ENCODE measurements at regions of chr4 and their contacts with region 1.

Region 1: DNA sequence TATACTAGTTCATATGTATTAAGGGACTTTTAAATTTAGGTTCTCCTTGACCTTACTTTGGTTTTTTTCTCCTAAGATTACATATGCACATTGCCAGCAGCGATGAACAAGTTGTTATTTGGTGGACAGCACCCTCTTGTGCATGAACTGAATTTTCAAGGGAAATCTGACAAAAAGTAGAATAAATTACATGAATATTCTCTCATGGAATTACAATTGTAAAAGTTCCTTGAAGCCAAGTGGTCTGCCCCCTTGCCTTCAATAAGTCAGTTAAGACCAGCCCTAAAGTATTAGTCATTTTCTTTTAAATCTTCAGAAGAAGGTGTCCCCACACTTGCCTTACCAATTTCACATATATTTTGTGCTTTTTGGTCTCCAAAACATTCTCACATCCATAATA is 30.7 kb upstream of the SMARCA5 start:
- DNase-seq: peak; percentile 18
- H3K4me3 ChIP-seq: no peak overlapping the region
- H3K27ac ChIP-seq: no peak overlapping the region
- H3K4me1 ChIP-seq: no peaks in the 10 kb centered on the region
- H3K27me3 ChIP-seq: no peaks in the 10 kb centered on the region
- CTCF ChIP-seq: peak; percentile 40 to 57

Region 2: DNA sequence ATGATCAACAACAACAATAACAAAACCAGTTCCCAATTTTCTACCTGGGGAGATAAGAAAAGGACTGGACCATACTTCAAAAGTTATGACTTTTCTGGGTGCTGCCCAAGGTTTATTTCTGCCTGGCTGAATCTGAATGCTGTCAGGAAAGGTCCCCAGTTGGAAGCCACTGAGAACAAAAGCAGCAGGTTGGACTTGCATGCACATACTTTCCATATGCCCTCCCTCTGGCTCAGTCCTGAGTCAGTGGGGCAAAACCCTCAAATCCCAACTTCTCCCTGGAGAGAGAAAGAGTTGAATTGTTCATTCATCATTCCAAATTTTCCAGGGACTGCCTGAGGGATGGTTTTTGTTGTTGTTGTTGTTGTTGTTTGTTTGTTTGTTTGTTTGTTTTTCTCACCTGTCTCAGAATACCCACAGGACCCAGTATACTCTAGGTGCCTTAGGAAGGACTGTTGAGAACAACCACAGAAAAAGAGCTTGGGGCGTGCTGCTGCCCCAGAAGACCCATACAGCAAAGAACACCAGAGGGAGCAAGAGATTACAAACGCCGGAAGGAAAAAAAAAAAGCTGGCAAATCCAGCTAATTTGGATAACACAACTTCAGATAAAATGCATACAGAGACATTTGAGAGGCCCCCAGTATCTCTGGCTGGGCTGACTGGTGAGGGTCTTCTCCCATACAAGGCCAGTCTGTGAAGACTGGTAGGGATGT is 497.8 kb before region 1 on chr4:
- CTCF ChIA-PET with region 1: no interaction called
- dilution Hi-C with region 1: no loop called
- in situ Hi-C with region 1: loop called in 1 of 2 experiments (anchors 25 kb)
- intact Hi-C with region 1: no loop called
- DNase-seq: peak; percentile 16
- H3K4me3 ChIP-seq: no peak overlapping the region
- H3K27ac ChIP-seq: no peak overlapping the region
- H3K4me1 ChIP-seq: no peaks in the 10 kb centered on the region
- H3K27me3 ChIP-seq: peaks cover 11% of the 10 kb centered on the region
- CTCF ChIP-seq: peak; percentile 44 to 59

Region 3: DNA sequence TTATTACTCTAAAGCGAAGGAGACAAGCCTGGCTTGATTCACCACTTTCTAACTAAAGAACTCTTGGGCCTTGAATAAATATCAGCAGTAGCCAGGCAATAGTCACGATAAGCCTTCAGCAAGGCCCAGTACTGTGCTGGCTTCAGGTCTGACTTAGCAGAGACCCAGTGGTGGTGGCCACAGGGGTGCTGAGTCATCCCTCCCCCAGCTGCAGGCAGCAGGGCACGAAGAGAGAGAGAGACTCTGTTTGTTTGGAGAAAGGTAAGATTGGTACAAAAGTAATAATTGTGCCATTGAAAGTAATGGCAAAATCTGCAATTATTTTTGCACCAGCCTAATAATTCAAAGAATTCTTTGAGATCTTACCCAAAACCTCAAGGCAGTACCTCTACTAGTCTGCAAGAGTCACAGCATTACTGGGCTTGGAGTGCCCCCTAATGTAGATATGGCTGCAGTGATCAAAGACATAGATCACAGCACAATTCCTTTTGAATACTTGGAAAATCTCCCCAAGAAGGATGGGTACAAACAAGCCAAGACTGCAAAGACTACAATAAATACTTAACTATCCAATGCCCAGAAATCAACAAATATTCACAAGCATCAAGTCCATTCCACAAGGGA is 457.6 kb before region 1 on chr4:
- CTCF ChIA-PET with region 1: no interaction called
- dilution Hi-C with region 1: no loop called
- in situ Hi-C with region 1: loop called in 1 of 2 experiments (anchors 25 kb)
- intact Hi-C with region 1: no loop called
- DNase-seq: peak; percentile 21
- H3K4me3 ChIP-seq: no peak overlapping the region
- H3K27ac ChIP-seq: no peak overlapping the region
- H3K4me1 ChIP-seq: no peaks in the 10 kb centered on the region
- H3K27me3 ChIP-seq: no peaks in the 10 kb centered on the region
- CTCF ChIP-seq: peak in 1 of 2 donors; percentile 31

Region 4: GRCh38 chr4:143207557-143207956 is 275.3 kb before region 1 on chr4:
- CTCF ChIA-PET with region 1: no interaction called
- dilution Hi-C with region 1: no loop called
- in situ Hi-C with region 1: loop called (anchors 10 to 25 kb)
- intact Hi-C with region 1: loop called (anchors 1 kb)
- DNase-seq: peak; percentile 16
- H3K4me3 ChIP-seq: no peak overlapping the region
- H3K27ac ChIP-seq: no peak overlapping the region
- H3K4me1 ChIP-seq: no peaks in the 10 kb centered on the region
- H3K27me3 ChIP-seq: no peaks in the 10 kb centered on the region
- CTCF ChIP-seq: peak; percentile 21 to 52

Region 5: DNA sequence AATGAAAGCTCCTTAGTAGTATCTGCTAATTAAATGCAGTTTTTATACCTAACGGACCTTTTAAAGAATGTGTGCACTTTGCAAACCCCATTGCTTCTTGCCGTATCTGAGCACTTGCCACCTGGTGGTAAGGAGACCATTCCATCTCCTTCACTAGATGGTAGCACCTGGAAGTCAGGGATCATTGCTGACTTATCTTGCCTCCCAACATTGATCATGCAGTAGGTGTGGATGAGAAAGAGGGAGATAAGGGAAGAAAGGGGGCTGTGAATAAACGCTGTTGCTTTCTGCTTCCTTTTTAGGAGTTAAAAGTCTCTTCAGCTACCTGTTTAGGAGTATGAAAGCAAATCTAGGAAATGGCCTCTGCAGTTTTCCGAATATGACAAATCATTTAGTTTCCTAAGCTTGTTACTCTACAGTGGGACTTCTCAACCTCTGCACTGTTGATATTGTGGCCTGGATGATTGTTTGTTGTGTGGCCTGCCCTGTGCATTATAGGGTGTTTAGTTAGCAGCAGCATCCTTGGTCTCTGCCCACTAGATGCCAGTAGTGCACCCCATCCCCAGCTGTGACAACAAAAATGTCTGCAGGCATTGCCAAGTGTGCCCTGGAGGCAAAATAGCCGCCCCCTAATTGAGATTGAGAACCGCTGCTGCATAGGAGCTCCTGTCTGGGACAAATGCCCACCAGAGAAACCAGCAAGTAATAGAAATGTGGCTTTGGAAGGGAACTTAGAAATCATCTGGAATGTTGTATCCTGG is 107.3 kb before region 1 on chr4:
- CTCF ChIA-PET with region 1: no interaction called
- dilution Hi-C with region 1: no loop called
- in situ Hi-C with region 1: no loop called
- intact Hi-C with region 1: loop called (anchors 1 kb)
- DNase-seq: no peak
- H3K4me3 ChIP-seq: no peak overlapping the region
- H3K27ac ChIP-seq: no peak overlapping the region
- H3K4me1 ChIP-seq: no peaks in the 10 kb centered on the region
- H3K27me3 ChIP-seq: no peaks in the 10 kb centered on the region
- CTCF ChIP-seq: peak; percentile 41 to 57

Region 6: DNA sequence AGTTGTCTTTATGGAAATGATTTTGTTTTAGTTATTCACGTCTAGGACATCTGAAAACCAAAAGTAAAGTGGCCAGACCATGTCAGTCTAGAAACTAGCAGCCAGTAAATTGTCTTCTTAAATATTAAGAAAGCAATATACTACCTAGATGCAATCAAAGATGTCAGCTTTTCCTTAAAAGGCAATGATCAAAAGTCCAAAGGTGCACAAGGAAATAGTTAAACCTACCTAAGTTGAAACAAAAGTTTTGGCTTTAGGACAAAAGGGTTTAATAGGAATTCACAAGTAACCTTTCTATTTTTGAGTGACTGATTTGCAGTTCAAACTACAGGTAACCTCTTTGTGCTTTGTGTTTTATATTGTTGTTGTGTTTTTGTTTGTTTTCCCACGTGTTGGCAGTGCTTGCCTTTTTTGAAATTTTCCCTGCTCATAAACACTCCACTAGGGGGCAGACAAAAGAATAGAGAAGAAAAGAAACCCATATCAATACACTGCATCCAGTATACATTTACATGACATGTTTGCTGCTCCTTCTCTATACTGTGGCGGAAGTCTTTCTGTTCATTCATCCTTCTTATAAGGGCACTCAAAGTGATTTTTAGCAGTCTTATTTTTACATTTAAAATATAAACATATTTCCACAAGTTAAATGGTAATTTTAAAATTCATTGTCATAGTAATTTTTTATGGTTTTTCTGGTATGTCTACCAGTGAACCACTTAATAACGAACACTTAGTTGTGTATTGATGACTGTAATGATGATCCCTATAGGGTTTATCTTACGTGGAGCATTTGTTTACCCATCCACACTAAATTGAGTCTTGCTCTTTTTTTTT is 83.5 kb before region 1 on chr4:
- CTCF ChIA-PET with region 1: no interaction called
- dilution Hi-C with region 1: no loop called
- in situ Hi-C with region 1: no loop called
- intact Hi-C with region 1: loop called (anchors 1 kb)
- DNase-seq: peak; percentile 17
- H3K4me3 ChIP-seq: no peak overlapping the region
- H3K27ac ChIP-seq: no peak overlapping the region
- H3K4me1 ChIP-seq: no peaks in the 10 kb centered on the region
- H3K27me3 ChIP-seq: no peaks in the 10 kb centered on the region
- CTCF ChIP-seq: peak; percentile 68 to 71